MCF 10A (cell line): ENCODE measurements at regions of chr1 and their contacts with region 1.

Region 1: GRCh38 chr1:55827350-55827749 is 612.2 kb upstream of the USP24 start:
- DNase-seq: peak; percentile 93
- H3K4me3 Mint-ChIP-seq: peak overlapping the region; percentile 53
- H3K27ac Mint-ChIP-seq: peak overlapping the region; percentile 83
- H3K4me1 Mint-ChIP-seq: peaks cover 23% of the 10 kb centered on the region
- H3K27me3 Mint-ChIP-seq: no peaks in the 10 kb centered on the region
- CTCF ChIP-seq: no peak

Region 2: GRCh38 chr1:55727010-55727409 is 100.3 kb before region 1 on chr1:
- CTCF ChIA-PET with region 1: interaction called, 3 read pairs
- POLR2A ChIA-PET with region 1: no interaction called
- intact Hi-C with region 1: loop called (anchors 10 kb)
- DNase-seq: peak; percentile 71
- H3K4me3 Mint-ChIP-seq: peak overlapping the region; percentile 30
- H3K27ac Mint-ChIP-seq: peak overlapping the region; percentile 11
- H3K4me1 Mint-ChIP-seq: peaks cover 36% of the 10 kb centered on the region
- H3K27me3 Mint-ChIP-seq: no peaks in the 10 kb centered on the region
- CTCF ChIP-seq: no peak

Region 3: DNA sequence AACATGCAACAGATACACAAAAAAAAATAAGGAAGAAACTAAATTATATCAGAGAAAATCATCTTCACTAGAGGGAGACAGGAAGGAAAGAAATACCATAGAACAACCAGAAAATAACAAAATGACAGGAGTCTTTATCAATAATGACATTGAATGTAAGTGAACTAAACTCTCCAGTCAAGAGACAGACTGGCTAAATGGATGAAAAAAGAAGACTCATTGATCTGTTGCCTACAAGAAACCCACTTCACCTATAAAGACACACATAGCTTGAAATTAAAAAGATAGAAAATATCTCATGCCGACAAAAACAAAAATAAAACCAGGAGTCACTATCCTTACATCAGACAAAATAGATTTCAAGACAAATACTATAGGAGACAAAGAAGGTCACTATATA is 19.1 kb before region 1 on chr1:
- CTCF ChIA-PET with region 1: no interaction called
- POLR2A ChIA-PET with region 1: no interaction called
- intact Hi-C with region 1: no loop called
- DNase-seq: no peak
- H3K4me3 Mint-ChIP-seq: no peak overlapping the region
- H3K27ac Mint-ChIP-seq: no peak overlapping the region
- H3K4me1 Mint-ChIP-seq: peaks cover 13% of the 10 kb centered on the region
- H3K27me3 Mint-ChIP-seq: no peaks in the 10 kb centered on the region
- CTCF ChIP-seq: no peak

Region 4: DNA sequence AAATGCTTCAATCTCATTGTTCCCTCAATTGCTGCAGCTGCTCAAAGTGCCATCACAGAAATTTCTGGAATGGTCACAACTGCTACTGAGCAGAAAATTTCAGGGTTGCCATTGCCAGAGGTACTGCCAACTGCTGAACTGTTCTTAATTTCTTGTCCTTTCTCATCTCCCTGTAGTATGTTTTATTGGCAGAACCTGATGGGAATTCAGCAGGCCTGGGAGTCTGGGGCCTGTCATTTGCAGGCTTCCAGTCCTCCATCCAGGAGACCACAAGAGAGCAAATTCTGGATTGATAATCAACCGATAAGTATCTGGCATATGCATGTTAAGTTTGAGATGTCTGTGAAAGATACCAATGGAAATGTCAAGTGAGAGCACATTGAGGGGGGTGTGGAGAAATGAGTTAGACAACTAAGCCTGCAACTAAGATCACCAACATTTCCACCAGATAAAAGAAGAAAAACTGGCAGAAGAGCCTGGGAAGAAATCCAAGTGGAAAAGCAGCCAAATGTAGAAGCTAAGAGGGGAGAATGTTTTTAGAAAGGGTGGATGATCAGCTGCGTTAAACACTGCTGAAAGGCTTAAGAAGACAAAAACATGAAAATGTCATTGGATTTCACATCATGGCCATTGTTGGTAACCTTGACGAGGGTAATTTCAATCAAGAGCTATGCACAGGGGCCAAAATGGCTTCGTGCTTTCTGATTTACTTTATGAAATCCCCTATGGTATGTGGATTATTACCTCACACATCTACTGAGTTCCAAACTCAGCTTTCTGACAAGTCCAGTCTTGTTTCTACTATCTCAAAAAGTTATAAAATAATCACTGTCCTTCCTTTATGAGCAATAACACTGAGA is 104.0 kb after region 1 on chr1:
- CTCF ChIA-PET with region 1: no interaction called
- POLR2A ChIA-PET with region 1: no interaction called
- intact Hi-C with region 1: no loop called
- DNase-seq: peak; percentile 6
- H3K4me3 Mint-ChIP-seq: no peak overlapping the region
- H3K27ac Mint-ChIP-seq: peak overlapping the region; percentile 43
- H3K4me1 Mint-ChIP-seq: peaks cover 7% of the 10 kb centered on the region
- H3K27me3 Mint-ChIP-seq: no peaks in the 10 kb centered on the region
- CTCF ChIP-seq: no peak